Ovary (tissue), 10 donors: ENCODE measurements at regions of chr1 and their contacts with region 1.

Region 1: DNA sequence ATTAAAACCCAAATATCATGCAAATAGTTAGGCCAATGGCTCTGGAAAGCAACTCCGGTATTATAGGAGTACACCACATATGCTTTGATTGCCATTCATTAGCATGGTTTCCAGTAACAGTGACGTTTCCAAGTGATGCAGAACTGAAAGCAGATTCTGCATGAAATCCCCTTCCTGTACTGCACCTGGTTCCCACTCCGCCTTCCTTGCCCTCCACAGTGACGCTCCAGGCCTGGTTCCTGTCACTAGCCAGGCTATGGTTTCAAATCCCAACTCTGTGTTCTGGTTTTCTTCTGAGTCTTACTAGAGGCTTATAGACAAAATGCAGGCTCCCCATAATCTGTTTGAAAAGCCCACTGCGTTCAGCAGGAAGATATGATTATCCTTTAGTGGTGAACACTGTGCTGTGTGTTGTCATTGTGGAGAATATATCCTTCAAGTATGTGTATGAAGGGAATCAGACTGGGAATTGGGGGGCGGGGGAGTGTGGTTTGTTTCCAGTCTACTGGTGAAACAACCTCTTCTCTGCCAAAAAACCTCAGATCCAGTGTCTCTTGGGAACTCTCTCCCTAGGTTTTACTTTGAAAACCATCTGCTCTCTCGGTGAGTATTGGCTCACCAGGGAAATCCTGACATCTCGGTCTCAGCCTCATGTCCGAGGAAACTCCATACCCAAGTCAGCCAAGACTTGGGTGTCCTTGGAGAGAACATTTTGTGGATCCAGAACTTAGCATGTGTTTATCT is 78.7 kb downstream of the TYW3 start:
- DNase-seq: no peak
- H3K4me3 ChIP-seq: no peak overlapping the region
- H3K27ac ChIP-seq: no peak overlapping the region
- H3K4me1 ChIP-seq: no peaks in the 10 kb centered on the region
- H3K27me3 ChIP-seq: no peaks in the 10 kb centered on the region
- CTCF ChIP-seq: no peak
- EP300 ChIP-seq: no peak
- POLR2A ChIP-seq: no peak

Region 2: DNA sequence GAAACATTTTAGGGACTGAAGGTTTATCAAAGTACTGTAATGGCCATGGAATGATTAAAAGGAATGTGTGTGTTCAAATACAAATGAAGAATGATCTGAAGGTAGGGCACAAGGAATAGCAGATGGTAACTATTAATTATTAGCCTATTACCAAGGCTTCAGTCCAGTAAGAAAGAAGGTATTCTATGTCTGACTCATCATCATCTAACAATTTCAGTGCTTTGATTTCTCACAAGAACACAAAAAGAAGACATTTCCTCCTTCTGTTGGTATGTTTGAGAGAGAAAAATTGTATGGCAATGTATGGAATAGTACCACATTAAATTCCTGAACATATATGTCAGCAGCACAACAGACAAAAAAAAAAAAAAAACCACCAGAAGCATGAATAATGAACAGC is 21.2 kb before region 1 on chr1:
- intact Hi-C with region 1: loop called in 1 of 4 experiments (anchors 2 kb)
- DNase-seq: no peak
- H3K4me3 ChIP-seq: no peak overlapping the region
- H3K27ac ChIP-seq: no peak overlapping the region
- H3K4me1 ChIP-seq: no peaks in the 10 kb centered on the region
- H3K27me3 ChIP-seq: no peaks in the 10 kb centered on the region
- CTCF ChIP-seq: no peak
- EP300 ChIP-seq: no peak
- POLR2A ChIP-seq: no peak

Region 3: GRCh38 chr1:74937176-74937575 is 125.6 kb after region 1 on chr1:
- intact Hi-C with region 1: no loop called
- DNase-seq: no peak
- H3K4me3 ChIP-seq: no peak overlapping the region
- H3K27ac ChIP-seq: no peak overlapping the region
- H3K4me1 ChIP-seq: no peaks in the 10 kb centered on the region
- H3K27me3 ChIP-seq: no peaks in the 10 kb centered on the region
- CTCF ChIP-seq: no peak
- EP300 ChIP-seq: no peak
- POLR2A ChIP-seq: no peak

Region 4: DNA sequence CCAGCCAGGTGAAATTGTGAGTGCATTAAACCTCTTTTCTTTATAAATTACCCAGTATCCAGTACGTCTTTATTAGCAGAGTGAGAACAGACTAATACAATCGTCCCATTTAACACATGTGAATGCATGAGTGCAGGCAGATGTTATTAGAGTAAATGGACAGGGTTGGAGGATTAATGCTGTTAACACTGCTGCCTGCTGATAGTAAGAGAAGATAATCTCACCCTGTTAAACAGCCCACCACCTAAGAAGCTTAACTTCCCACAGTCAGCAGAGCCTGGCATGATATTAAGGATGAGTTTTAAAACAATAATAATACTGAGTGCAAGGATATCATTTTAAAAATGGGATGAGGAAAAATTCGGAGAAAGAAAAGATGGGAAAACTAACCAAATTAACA is 141.2 kb after region 1 on chr1:
- intact Hi-C with region 1: no loop called
- DNase-seq: no peak
- H3K4me3 ChIP-seq: no peak overlapping the region
- H3K27ac ChIP-seq: no peak overlapping the region
- H3K4me1 ChIP-seq: no peaks in the 10 kb centered on the region
- H3K27me3 ChIP-seq: no peaks in the 10 kb centered on the region
- CTCF ChIP-seq: no peak
- EP300 ChIP-seq: no peak
- POLR2A ChIP-seq: no peak